B cell (primary cell): ENCODE measurements at regions of chr2 and their contacts with region 1.

Region 1: GRCh38 chr2:70616168-70616694 is 62.6 kb upstream of the TGFA start:
- DNase-seq: no peak
- ATAC-seq: no peak
- H3K4me3 ChIP-seq: no peak overlapping the region
- H3K4me3 Mint-ChIP-seq: no peak overlapping the region
- H3K27ac ChIP-seq: no peak overlapping the region
- H3K27ac Mint-ChIP-seq: no peak overlapping the region
- H3K4me1 ChIP-seq: no peaks in the 10 kb centered on the region
- H3K4me1 Mint-ChIP-seq: no peaks in the 10 kb centered on the region
- H3K27me3 ChIP-seq: peaks cover 0 to 4% (median 0%) of the 10 kb centered on the region in 4 experiments
- H3K27me3 Mint-ChIP-seq: peaks cover 33% of the 10 kb centered on the region
- CTCF ChIP-seq: no peak

Region 2: DNA sequence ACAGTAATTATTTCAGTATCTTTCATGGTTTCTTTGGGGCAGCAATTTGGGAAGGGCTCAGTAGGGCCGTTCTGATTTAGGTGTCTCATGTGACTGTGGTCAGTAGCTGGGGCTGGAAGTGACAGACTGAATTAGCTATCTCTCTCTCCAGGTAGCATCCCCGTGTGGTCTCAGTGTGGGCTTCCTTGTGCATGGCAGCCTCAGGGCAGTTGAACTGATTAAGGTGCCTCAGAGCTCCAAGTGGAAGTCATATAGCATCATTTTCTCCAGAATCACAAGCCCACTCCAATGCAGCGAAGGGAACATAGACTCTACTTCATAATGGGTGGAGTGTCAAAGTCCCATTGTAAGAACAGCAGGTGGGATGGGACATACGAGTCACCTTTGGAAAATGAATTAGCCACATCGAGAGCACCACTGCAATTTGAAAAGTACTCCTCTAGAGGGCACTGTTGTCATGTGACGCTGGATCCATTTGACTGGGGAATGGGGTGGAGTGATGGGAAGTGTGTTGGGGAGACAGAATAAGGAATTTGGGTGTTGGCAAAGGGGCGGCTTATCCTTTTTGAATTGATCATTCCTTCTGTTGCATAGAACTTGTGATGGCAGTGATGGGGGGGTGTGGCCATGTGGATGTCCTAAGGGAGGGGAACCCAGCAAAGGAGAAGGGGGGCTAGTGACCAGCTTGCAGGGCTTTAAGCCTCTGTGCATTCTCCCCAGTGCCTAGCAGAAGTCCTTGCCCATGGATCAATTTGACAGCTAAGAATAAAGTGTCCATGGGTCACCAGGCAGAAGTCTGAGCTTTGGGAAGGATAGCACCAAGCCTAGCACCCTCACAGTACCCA is 275.1 kb before region 1 on chr2:
- CTCF ChIA-PET with region 1: interaction called, 61 read pairs
- POLR2A ChIA-PET with region 1: no interaction called
- intact Hi-C with region 1: no loop called
- DNase-seq: peak; percentile 56
- ATAC-seq: no peak
- H3K4me3 ChIP-seq: no peak overlapping the region
- H3K4me3 Mint-ChIP-seq: no peak overlapping the region
- H3K27ac ChIP-seq: no peak overlapping the region
- H3K27ac Mint-ChIP-seq: no peak overlapping the region
- H3K4me1 ChIP-seq: peaks cover 0 to 4% of the 10 kb centered on the region in 2 donors
- H3K4me1 Mint-ChIP-seq: no peaks in the 10 kb centered on the region
- H3K27me3 ChIP-seq: peaks cover 0 to 21% (median 1%) of the 10 kb centered on the region in 4 experiments
- H3K27me3 Mint-ChIP-seq: peaks cover 33% of the 10 kb centered on the region
- CTCF ChIP-seq: peak; percentile 78

Region 3: GRCh38 chr2:70553334-70553583 is 63.0 kb before region 1 on chr2:
- CTCF ChIA-PET with region 1: no interaction called
- POLR2A ChIA-PET with region 1: no interaction called
- intact Hi-C with region 1: no loop called
- DNase-seq: no peak
- ATAC-seq: no peak
- H3K4me3 ChIP-seq: peak overlapping the region; percentile 24 to 75 (median 59)
- H3K4me3 Mint-ChIP-seq: peak overlapping the region; percentile 87
- H3K27ac ChIP-seq: no peak overlapping the region
- H3K27ac Mint-ChIP-seq: peak overlapping the region; percentile 53
- H3K4me1 ChIP-seq: peaks cover 20% of the 10 kb centered on the region in 2 donors
- H3K4me1 Mint-ChIP-seq: peaks cover 19% of the 10 kb centered on the region
- H3K27me3 ChIP-seq: peaks cover 0 to 45% (median 32%) of the 10 kb centered on the region in 4 experiments
- H3K27me3 Mint-ChIP-seq: peaks cover 69% of the 10 kb centered on the region
- CTCF ChIP-seq: no peak

Region 4: DNA sequence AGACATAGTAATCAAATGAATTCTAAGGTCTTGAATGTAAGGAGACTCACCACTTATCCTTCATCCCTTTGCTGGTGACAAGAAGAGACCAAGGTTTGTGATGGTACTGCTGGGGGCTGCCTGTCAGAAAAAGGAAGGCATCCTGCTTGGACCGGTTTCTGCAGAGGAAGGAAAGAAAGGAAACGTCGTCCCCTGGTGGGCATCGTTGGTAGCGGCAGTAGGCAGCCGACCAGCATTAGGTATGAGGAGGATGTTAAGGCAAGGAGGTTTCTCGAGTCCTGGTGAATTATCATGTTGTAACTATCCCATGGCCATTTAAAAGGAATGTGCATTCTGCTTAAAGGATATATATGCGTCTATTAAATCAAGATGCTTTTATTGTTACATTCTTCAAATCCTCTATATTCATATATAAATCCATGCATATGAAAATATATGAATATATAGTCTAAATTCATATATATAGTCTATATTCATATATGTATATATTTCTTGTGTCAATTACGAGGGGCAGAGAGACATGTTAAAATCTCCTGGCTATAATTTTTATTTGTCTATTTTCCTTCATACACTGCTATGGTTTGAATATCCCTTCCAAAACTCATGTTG is 31.7 kb after region 1 on chr2:
- CTCF ChIA-PET with region 1: interaction called, 15 read pairs
- POLR2A ChIA-PET with region 1: no interaction called
- intact Hi-C with region 1: no loop called
- DNase-seq: peak; percentile 73
- ATAC-seq: peak; percentile 77
- H3K4me3 ChIP-seq: no peak overlapping the region
- H3K4me3 Mint-ChIP-seq: no peak overlapping the region
- H3K27ac ChIP-seq: no peak overlapping the region
- H3K27ac Mint-ChIP-seq: no peak overlapping the region
- H3K4me1 ChIP-seq: no peaks in the 10 kb centered on the region
- H3K4me1 Mint-ChIP-seq: no peaks in the 10 kb centered on the region
- H3K27me3 ChIP-seq: peaks cover 0 to 13% (median 9%) of the 10 kb centered on the region in 4 experiments
- H3K27me3 Mint-ChIP-seq: peaks cover 22% of the 10 kb centered on the region
- CTCF ChIP-seq: peak; percentile 98

Region 5: GRCh38 chr2:70828914-70829824 is 212.9 kb after region 1 on chr2:
- CTCF ChIA-PET with region 1: no interaction called
- POLR2A ChIA-PET with region 1: no interaction called
- intact Hi-C with region 1: no loop called
- DNase-seq: no peak
- ATAC-seq: no peak
- H3K4me3 ChIP-seq: no peak overlapping the region
- H3K4me3 Mint-ChIP-seq: no peak overlapping the region
- H3K27ac ChIP-seq: no peak overlapping the region
- H3K27ac Mint-ChIP-seq: no peak overlapping the region
- H3K4me1 ChIP-seq: no peaks in the 10 kb centered on the region
- H3K4me1 Mint-ChIP-seq: no peaks in the 10 kb centered on the region
- H3K27me3 ChIP-seq: peaks cover 0 to 3% (median 0%) of the 10 kb centered on the region in 4 experiments
- H3K27me3 Mint-ChIP-seq: peaks cover 40% of the 10 kb centered on the region
- CTCF ChIP-seq: no peak